ENCODE measurements at regions of chr10 and their contacts with region 1.

Region 1: DNA sequence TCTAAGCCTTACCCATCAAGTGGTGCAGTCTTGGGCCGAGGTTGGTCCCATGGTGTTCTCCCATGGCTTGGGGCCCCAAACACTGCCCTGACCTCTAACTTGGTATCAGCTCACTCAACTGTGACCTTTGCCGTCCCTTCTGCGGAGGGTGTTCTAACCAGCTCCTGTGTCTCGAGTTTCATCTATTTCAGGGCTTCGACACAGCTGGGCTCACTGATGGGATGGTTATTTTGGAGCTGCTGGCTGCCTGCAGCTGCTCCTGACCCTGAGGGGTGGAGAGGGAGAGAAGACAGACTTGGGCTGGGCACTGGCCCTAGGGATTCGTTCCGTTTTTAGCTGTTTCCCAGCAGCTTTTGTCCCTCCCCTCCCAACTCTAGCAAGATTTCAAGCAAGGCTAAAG is 86.9 kb downstream of the NEURL1 start:
- DNase-seq: no peak
- H3K4me3 ChIP-seq: no peak overlapping the region
- H3K27ac ChIP-seq: no peak overlapping the region
- H3K4me1 ChIP-seq: no peaks in the 10 kb centered on the region
- H3K27me3 ChIP-seq: no peaks in the 10 kb centered on the region
- CTCF ChIP-seq: no peak
- POLR2A ChIP-seq: no peak

Region 2: DNA sequence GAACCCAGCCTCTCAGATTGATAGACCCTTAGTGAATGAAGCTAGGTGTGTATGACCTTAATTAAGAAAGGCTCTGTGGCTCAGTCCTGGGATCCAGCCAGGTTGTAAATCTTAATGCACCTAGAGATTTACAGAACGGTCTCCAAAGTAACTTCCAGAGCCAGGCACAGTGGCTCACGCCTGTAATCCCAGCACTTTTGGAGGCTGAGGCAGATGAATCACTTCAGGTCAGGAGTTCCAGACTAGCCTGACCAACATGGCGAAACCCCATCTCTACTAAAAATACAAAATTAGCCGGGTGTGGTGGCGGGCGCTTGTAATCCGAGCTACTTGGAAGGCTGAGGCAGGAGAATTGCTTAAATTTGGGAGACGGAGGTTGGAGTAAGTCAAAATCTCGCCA is 152.6 kb before region 1 on chr10:
- intact Hi-C with region 1: loop called (anchors 2 kb)
- DNase-seq: no peak
- H3K4me3 ChIP-seq: no peak overlapping the region
- H3K27ac ChIP-seq: no peak overlapping the region
- H3K4me1 ChIP-seq: no peaks in the 10 kb centered on the region
- H3K27me3 ChIP-seq: no peaks in the 10 kb centered on the region
- CTCF ChIP-seq: no peak
- POLR2A ChIP-seq: no peak

Region 3: DNA sequence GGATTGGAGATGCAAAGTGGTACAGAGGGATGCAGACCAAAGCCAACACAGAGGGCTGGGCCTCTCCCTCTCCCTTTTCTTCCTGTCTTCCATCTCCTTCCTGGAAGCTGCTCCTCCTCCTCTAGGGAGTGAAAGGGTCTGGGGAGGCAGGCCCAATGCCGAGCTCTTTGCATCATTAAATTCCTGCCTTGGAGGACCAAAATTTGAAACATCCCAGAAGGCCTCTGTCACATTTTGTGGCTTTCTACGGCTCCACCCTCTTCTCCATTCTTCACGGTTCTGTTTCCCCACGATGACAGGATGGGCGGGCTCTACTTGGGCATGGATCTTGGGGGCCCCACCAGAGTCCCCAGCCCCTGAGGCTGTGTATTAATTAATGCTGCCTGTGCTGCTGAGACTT is 10.5 kb before region 1 on chr10:
- intact Hi-C with region 1: no loop called
- DNase-seq: no peak
- H3K4me3 ChIP-seq: no peak overlapping the region
- H3K27ac ChIP-seq: no peak overlapping the region
- H3K4me1 ChIP-seq: no peaks in the 10 kb centered on the region
- H3K27me3 ChIP-seq: no peaks in the 10 kb centered on the region
- CTCF ChIP-seq: no peak
- POLR2A ChIP-seq: no peak